H1 (cell line): ENCODE measurements at regions of chr16 and their contacts with region 1.

Region 1: GRCh38 chr16:85683363-85683762 is 5.4 kb downstream of the GINS2 start:
- DNase-seq: no peak
- H3K4me3 ChIP-seq: no peak overlapping the region
- H3K27ac ChIP-seq: no peak overlapping the region
- H3K4me1 ChIP-seq: peaks cover 0 to 5% (median 0%) of the 10 kb centered on the region in 4 experiments; a peak in 1 of 7 replicates
- H3K27me3 ChIP-seq: no peaks in the 10 kb centered on the region
- CTCF ChIP-seq: no peak
- EP300 ChIP-seq: no peak
- POLR2A ChIP-seq: no peak
- RAD21 ChIP-seq: no peak

Region 2: GRCh38 chr16:85667841-85668413 is 15.4 kb before region 1 on chr16:
- CTCF ChIA-PET with region 1: interaction called, 248 read pairs
- POLR2A ChIA-PET with region 1: interaction called, 77 read pairs
- DNase-seq: no peak
- H3K4me3 ChIP-seq: no peak overlapping the region
- H3K27ac ChIP-seq: no peak overlapping the region
- H3K4me1 ChIP-seq: no peaks in the 10 kb centered on the region
- H3K27me3 ChIP-seq: no peaks in the 10 kb centered on the region
- CTCF ChIP-seq: no peak
- EP300 ChIP-seq: no peak
- POLR2A ChIP-seq: no peak
- RAD21 ChIP-seq: no peak

Region 3: DNA sequence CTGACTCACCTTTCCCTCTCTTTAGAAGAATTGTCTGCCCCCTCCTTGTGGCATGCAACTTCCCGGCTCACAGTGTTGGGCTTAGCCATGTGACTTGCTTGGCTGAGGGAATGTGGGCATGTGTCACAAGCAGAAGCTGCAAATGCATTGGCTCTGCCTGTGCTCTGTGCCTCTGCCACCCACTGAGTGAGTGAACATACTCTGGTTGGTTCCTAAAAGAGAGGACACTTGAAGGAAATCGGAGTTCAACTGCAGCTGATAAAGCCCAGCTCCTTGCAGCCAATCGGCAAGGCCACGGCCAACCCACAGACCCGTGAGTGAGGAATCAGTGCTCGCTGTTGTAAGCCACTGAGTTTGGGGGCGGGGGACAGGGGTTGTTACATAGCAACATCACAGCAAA is 16.3 kb after region 1 on chr16:
- CTCF ChIA-PET with region 1: interaction called, 31 read pairs
- POLR2A ChIA-PET with region 1: interaction called, 6 read pairs
- DNase-seq: no peak
- H3K4me3 ChIP-seq: no peak overlapping the region
- H3K27ac ChIP-seq: no peak overlapping the region
- H3K4me1 ChIP-seq: peaks cover 0 to 6% (median 2%) of the 10 kb centered on the region in 4 experiments; a peak in 3 of 7 replicates
- H3K27me3 ChIP-seq: no peaks in the 10 kb centered on the region
- CTCF ChIP-seq: no peak
- EP300 ChIP-seq: no peak
- POLR2A ChIP-seq: no peak
- RAD21 ChIP-seq: no peak

Region 4: GRCh38 chr16:85750827-85751697 is 67.7 kb after region 1 on chr16 and contains the start of gene C16orf74:
- CTCF ChIA-PET with region 1: no interaction called
- POLR2A ChIA-PET with region 1: no interaction called
- DNase-seq: no peak
- H3K4me3 ChIP-seq: peak within 1 kb of the TSS; percentile 38 to 71 (median 60)
- H3K27ac ChIP-seq: no peak within 1 kb of the TSS
- H3K4me1 ChIP-seq: peaks cover 0 to 39% (median 30%) of the 10 kb centered on the region in 4 experiments; a peak in 6 of 7 replicates
- H3K27me3 ChIP-seq: peaks cover 3 to 34% (median 22%) of the 10 kb centered on the region in 4 experiments
- CTCF ChIP-seq: no peak
- EP300 ChIP-seq: no peak
- POLR2A ChIP-seq: no peak
- RAD21 ChIP-seq: no peak
- total RNA-seq, gene C16orf74: 6.1 and 7.3 TPM in 2 replicates